AG04450 (cell line): ENCODE measurements at regions of chr17 and their contacts with region 1.

Region 1: DNA sequence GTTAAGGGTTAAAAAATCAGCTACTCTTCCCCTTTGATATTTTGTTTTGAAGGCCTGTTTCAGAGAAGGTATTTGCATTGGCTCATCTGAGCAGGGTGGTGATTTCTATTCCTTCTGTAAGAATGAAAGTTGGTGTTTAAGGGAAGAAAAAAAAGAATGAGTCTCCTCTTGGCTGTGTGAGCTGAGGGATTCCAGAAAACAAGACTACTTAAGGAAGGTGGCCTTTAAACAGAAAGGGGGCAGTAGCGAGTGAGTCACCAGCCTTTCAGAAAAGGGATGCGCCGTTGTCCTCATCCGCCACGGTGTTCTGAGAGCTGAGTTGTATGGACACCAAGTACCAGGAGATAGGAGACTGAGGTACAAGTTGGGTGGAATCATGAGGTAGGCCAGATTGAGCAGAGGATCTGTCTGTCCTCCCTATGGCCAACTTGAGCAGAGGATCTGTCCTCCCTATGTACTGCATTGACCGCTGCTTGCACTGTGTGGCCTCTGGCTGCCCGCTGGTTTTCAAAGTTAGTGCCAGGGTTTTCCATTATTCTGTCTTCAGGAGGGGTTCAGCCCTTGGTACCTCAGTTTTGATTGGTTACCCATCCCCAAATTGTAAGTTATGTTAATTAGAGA is 8.2 kb downstream of the PRKCA start:
- DNase-seq: no peak
- H3K4me3 ChIP-seq: no peak overlapping the region
- H3K27ac ChIP-seq: no peak overlapping the region
- H3K27me3 ChIP-seq: no peaks in the 10 kb centered on the region
- CTCF ChIP-seq: peak; percentile 21

Region 2: GRCh38 chr17:66275651-66276050 is 35.0 kb before region 1 on chr17:
- CTCF ChIA-PET with region 1: no interaction called
- POLR2A ChIA-PET with region 1: interaction called, 10 read pairs
- DNase-seq: peak; percentile 56
- H3K4me3 ChIP-seq: no peak overlapping the region
- H3K27ac ChIP-seq: no peak overlapping the region
- H3K27me3 ChIP-seq: no peaks in the 10 kb centered on the region
- CTCF ChIP-seq: no peak

Region 3: DNA sequence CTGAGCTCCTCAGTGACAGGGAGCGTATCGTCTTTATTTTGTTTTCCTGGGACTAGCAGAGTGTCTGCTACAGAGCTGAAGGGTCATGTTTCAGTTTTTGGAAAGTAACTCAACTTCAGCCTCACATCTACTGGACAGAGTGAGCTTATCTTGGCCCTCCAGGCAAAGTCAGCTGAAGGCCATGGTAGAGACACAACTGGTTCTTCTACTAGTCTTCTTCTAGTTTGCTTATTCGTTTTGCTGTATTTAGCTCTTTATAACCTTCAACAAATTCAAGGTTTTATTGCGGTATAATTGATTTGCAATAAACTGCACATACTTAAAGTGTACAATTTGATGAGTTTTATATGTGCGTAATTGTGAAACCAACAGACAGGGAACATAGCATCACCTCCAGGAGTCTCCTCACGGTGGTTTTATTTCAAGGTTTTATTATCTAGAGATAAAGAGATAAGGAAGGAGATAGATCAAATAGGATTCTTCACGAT is 14.3 kb before region 1 on chr17:
- CTCF ChIA-PET with region 1: no interaction called
- POLR2A ChIA-PET with region 1: no interaction called
- DNase-seq: no peak
- H3K4me3 ChIP-seq: no peak overlapping the region
- H3K27ac ChIP-seq: no peak overlapping the region
- H3K27me3 ChIP-seq: no peaks in the 10 kb centered on the region
- CTCF ChIP-seq: no peak

Region 4: GRCh38 chr17:66737524-66737923 is 426.9 kb after region 1 on chr17:
- CTCF ChIA-PET with region 1: no interaction called
- POLR2A ChIA-PET with region 1: no interaction called
- DNase-seq: no peak
- H3K4me3 ChIP-seq: no peak overlapping the region
- H3K27ac ChIP-seq: no peak overlapping the region
- H3K27me3 ChIP-seq: no peaks in the 10 kb centered on the region
- CTCF ChIP-seq: peak; percentile 17; the same call in 1 of the 2 replicates